A549 (cell line): ENCODE measurements at regions of chr3 and their contacts with region 1.

Region 1: DNA sequence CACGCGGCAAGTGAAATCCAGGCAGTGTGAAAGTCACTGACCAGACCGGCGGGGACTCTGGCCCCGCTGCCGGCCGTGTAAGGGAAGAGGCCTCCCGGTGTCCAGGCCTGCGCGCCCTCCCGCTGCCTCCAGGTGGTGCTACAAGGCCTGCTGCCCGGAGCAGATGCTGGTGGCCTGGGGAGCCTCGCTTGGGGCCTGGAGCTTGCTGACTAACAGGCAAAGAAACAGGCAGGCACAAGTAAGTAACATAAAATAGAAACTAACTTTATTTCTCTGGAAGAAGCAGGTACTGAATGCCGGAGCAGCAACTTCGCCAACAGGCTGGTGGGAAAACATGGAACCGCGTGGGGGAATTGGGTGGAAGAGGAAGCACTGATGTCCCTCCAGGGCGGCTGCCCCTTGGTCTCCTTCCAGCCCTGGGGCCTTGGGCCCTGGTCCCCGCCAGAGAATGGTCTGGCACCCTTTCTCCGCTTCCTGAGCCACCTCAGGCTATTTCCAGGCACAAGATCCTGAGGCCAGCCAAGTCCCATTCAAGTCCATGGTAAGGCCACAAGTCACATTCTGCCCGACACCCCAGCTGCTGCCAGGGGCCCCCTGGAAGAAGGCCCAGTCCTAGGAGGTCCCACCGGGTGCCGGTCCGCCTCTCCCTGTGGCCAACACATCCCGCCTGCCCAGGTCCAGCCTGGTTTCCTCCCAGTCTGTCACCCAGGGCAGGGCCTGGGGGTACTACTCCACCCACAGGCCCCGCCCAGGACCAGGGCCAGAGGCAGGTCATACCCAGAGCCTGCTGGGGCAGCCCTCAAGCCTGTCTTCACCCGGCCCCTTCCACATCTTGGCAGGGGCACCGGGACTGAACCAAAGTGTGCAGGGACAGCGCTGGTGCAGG is 45.0 kb downstream of the TNK2 start:
- DNase-seq: peak; percentile 53 to 79
- ATAC-seq: peak; percentile 96 to 99
- H3K4me3 ChIP-seq: no peak overlapping the region
- H3K27ac ChIP-seq: no peak overlapping the region
- H3K4me1 ChIP-seq: peaks cover 4% of the 10 kb centered on the region; the same call in 1 of the 3 replicates
- CTCF ChIP-seq: peak; percentile 74
- EP300 ChIP-seq: no peak
- POLR2A ChIP-seq: no peak
- RAD21 ChIP-seq: peak; percentile 69 to 73

Region 2: DNA sequence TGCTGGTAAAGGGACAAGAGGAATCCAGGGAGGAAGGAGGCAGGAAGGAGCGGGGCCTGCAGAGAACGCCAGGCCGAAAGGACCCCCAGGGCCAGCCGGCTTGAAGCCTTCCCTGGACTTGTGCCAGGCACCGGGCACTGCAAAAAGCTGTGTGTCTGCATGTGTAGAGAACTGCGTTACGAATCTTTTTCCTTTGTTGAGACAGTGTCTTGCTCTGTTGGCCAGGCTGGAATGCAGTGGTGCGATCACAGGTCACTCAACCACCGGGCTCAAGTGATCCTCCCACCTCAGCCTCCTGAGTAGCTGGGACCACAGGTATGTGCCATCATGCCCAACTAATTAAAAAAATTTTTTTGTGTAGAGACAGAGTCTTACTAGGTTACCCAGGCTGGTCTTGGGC is 34.6 kb before region 1 on chr3:
- CTCF ChIA-PET with region 1: no interaction called
- POLR2A ChIA-PET with region 1: no interaction called
- DNase-seq: no peak
- ATAC-seq: no peak
- H3K4me3 ChIP-seq: no peak overlapping the region
- H3K27ac ChIP-seq: no peak overlapping the region
- H3K4me1 ChIP-seq: no peaks in the 10 kb centered on the region
- CTCF ChIP-seq: no peak
- EP300 ChIP-seq: no peak
- POLR2A ChIP-seq: no peak
- RAD21 ChIP-seq: no peak

Region 3: DNA sequence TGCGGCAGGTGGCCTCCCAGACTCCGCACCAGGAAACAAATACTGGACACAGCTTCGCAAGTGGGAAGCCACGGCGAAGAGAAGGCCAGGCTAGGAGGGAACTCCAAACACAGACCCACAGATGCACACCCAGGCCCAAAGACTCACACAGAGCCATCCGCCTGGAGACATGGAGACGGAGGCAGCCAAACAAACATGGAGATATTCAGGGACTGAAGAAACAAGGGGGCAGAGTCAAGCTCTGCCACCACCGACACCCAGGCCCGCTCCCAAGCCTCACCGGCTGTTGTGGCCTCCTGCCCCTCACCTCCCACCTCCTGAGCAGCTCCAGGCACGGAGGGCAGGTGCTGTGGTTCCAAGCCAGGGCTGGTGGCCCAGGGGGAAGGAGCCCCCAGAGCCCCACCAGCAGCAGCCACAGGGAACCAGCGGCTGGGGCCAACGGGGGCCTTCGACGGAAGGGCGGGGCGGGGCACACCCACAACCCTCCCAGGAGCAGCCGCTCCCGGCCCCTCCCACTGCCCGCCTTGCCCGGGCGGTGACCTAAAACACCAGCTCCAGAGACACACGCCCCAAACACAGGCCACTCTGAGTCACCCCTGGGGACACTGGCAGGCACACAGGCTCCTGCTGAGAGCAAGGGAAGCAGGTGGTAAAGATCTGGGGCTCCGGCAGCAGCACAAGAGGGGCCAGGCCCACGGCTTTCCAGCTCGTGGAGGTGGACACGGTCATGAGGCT is 13.1 kb after region 1 on chr3:
- CTCF ChIA-PET with region 1: interaction called, 19 read pairs
- POLR2A ChIA-PET with region 1: no interaction called
- DNase-seq: peak; percentile 44 to 50
- ATAC-seq: peak; percentile 70 to 71; a peak in 4 of 6 replicates
- H3K4me3 ChIP-seq: no peak overlapping the region
- H3K27ac ChIP-seq: peak overlapping the region in 1 of 2 experiments; percentile 69; a peak in 3 of 6 replicates
- H3K4me1 ChIP-seq: peaks cover 15% of the 10 kb centered on the region
- CTCF ChIP-seq: no peak
- EP300 ChIP-seq: no peak
- POLR2A ChIP-seq: no peak
- RAD21 ChIP-seq: no peak

Region 4: GRCh38 chr3:195894780-195895607 is 31.6 kb after region 1 on chr3:
- CTCF ChIA-PET with region 1: interaction called, 206 read pairs
- POLR2A ChIA-PET with region 1: no interaction called
- DNase-seq: peak; percentile 78 to 79
- ATAC-seq: peak; percentile 83 to 84
- H3K4me3 ChIP-seq: peak overlapping the region; percentile 77
- H3K27ac ChIP-seq: peak overlapping the region; percentile 91 to 96
- H3K4me1 ChIP-seq: peaks cover 18% of the 10 kb centered on the region
- CTCF ChIP-seq: peak; percentile 75
- EP300 ChIP-seq: no peak
- POLR2A ChIP-seq: no peak
- RAD21 ChIP-seq: peak; percentile 77 to 81

Region 5: DNA sequence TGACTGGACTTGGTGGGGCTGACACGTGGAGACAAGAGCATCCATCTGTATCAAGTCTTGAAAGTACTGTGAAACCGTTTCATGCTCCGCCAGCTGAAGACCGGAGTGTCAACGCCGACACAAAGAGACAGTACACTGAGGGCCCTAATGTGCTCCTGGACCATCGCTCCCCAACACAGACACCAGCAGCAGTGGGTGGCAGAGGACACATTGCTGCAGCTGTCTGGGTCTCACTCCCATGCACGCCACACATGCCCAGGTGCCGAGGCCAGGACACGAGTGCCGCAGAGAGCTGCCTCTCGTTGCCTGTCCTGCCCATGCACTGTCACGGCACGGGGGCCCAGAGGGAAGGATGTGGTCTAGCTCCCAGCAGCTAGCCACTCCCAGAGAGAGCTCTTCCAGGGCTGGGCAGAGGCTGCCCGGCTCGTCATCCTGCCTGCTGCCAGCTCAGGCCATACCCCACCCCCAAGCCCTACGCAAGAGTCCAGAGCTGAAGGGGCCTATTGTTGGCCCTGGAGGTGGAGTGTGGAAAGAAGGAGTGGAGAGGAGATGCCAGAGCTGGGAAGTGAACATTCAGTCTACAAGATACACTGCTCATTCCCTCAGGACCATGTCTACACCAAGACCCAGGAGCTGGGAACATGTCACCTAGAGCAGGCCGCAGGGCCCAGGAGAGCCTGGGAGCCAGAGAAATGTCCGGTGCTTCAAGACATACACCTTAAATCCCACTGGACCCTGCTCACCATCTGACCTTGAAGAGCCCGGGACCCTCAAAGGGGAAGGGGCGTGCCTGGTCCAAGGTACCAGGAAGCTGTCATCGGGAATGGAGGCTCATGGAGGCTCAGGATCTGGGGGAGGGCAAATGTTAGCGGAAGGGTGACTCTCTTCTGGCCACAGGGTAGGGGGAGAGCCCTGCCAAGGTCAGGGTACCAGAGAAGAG is 37.3 kb after region 1 on chr3:
- CTCF ChIA-PET with region 1: interaction called, 206 read pairs
- POLR2A ChIA-PET with region 1: no interaction called
- DNase-seq: no peak
- ATAC-seq: no peak
- H3K4me3 ChIP-seq: no peak overlapping the region
- H3K27ac ChIP-seq: no peak overlapping the region
- H3K4me1 ChIP-seq: peaks cover 20% of the 10 kb centered on the region
- CTCF ChIP-seq: no peak
- EP300 ChIP-seq: no peak
- POLR2A ChIP-seq: no peak
- RAD21 ChIP-seq: no peak

Region 6: DNA sequence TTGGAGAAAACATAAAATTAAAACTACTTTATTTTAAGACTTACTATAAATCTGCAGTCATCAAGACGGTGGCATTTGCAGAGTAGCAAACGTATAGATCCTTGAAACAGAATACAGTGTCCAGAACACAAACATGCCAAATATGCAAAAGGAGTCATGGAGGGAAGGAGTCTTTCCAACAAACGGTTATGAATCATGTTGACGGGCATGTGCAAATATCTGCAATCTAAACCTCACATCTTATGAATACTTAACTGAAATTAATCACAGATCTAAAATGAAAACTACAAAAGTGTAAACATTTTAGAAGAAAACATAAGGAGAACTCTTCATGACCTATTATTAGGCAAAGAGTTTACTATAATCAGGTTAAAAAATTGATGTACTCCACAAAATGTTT is 149.1 kb after region 1 on chr3:
- CTCF ChIA-PET with region 1: no interaction called
- POLR2A ChIA-PET with region 1: no interaction called
- DNase-seq: no peak
- ATAC-seq: no peak
- H3K4me3 ChIP-seq: no peak overlapping the region
- H3K27ac ChIP-seq: no peak overlapping the region
- H3K4me1 ChIP-seq: no peaks in the 10 kb centered on the region
- CTCF ChIP-seq: no peak
- EP300 ChIP-seq: no peak
- POLR2A ChIP-seq: no peak
- RAD21 ChIP-seq: no peak